ENCODE measurements at regions of chr9 and their contacts with region 1.

Region 1: GRCh38 chr9:137551651-137552384 is at the start of gene MRPL41:
- DNase-seq: peak; percentile 83 to 92 (median 90)
- H3K4me3 ChIP-seq: peak within 1 kb of the TSS; percentile 62
- H3K4me3 Mint-ChIP-seq: peak within 1 kb of the TSS; percentile 81 to 92 (median 86)
- H3K27ac ChIP-seq: peak within 1 kb of the TSS; percentile 62
- H3K27ac Mint-ChIP-seq: peak within 1 kb of the TSS; percentile 77 to 93 (median 84)
- H3K4me1 ChIP-seq: peaks cover 14% of the 10 kb centered on the region
- H3K4me1 Mint-ChIP-seq: peaks cover 10 to 20% (median 13%) of the 10 kb centered on the region in 3 donors
- H3K27me3 ChIP-seq: no peaks in the 10 kb centered on the region
- H3K27me3 Mint-ChIP-seq: no peaks in the 10 kb centered on the region
- total RNA-seq, gene MRPL41: 65.9 to 68.2 TPM

Region 2: GRCh38 chr9:137491735-137492432 is 59.9 kb before region 1 on chr9:
- CTCF ChIA-PET with region 1: no interaction called
- POLR2A ChIA-PET with region 1: interaction called, 10 read pairs
- DNase-seq: peak in 1 of 5 donors; percentile 38
- H3K4me3 ChIP-seq: no peak overlapping the region
- H3K4me3 Mint-ChIP-seq: no peak overlapping the region
- H3K27ac ChIP-seq: peak overlapping the region; percentile 39
- H3K27ac Mint-ChIP-seq: peak overlapping the region in 1 of 8 donors; percentile 43
- H3K4me1 ChIP-seq: no peaks in the 10 kb centered on the region
- H3K4me1 Mint-ChIP-seq: peaks cover 7 to 11% (median 8%) of the 10 kb centered on the region in 3 donors
- H3K27me3 ChIP-seq: no peaks in the 10 kb centered on the region
- H3K27me3 Mint-ChIP-seq: no peaks in the 10 kb centered on the region